PC-3 (cell line): ENCODE measurements at regions of chr2 and their contacts with region 1.

Region 1: GRCh38 chr2:172555522-172556283 is at the start of gene PDK1:
- DNase-seq: peak; percentile 95
- ATAC-seq: peak; percentile 83
- H3K4me3 ChIP-seq: peak within 1 kb of the TSS; percentile 95
- H3K27ac ChIP-seq: peak within 1 kb of the TSS; percentile 69
- H3K4me1 ChIP-seq: peaks cover 54% of the 10 kb centered on the region
- H3K27me3 ChIP-seq: no peaks in the 10 kb centered on the region
- CTCF ChIP-seq: no peak
- total RNA-seq, gene PDK1: 45.8 and 66.3 TPM in 2 replicates

Region 2: DNA sequence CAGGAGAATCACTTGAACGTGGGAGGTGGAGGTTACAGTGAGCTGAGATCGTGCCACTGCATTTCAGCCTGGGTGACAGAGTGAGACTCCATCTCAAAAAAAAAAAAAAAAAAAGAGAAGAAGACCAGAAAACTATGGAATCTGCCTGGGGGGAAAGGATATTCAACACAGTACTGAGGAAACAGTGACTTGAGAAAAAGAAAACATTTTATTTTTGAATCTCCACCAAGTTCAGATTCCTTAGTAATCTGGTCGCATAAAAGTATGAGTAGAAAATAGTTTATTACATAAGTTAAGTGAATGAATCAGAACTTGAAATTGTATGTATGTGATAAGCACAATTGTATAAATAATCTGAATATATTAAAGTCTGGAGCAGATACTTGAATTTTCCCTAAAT is 646.4 kb before region 1 on chr2:
- CTCF ChIA-PET with region 1: no interaction called
- POLR2A ChIA-PET with region 1: interaction called, 12 read pairs
- intact Hi-C with region 1: no loop called
- DNase-seq: no peak
- ATAC-seq: no peak
- H3K4me3 ChIP-seq: no peak overlapping the region
- H3K27ac ChIP-seq: no peak overlapping the region
- H3K4me1 ChIP-seq: no peaks in the 10 kb centered on the region
- H3K27me3 ChIP-seq: no peaks in the 10 kb centered on the region
- CTCF ChIP-seq: no peak

Region 3: GRCh38 chr2:172380436-172381274 is 175.0 kb before region 1 on chr2:
- CTCF ChIA-PET with region 1: no interaction called
- POLR2A ChIA-PET with region 1: no interaction called
- intact Hi-C with region 1: no loop called
- DNase-seq: no peak
- ATAC-seq: no peak
- H3K4me3 ChIP-seq: no peak overlapping the region
- H3K27ac ChIP-seq: no peak overlapping the region
- H3K4me1 ChIP-seq: no peaks in the 10 kb centered on the region
- H3K27me3 ChIP-seq: no peaks in the 10 kb centered on the region
- CTCF ChIP-seq: no peak

Region 4: GRCh38 chr2:172623249-172623965 is 67.7 kb after region 1 on chr2:
- CTCF ChIA-PET with region 1: no interaction called
- POLR2A ChIA-PET with region 1: no interaction called
- intact Hi-C with region 1: no loop called
- DNase-seq: no peak
- ATAC-seq: peak; percentile 48
- H3K4me3 ChIP-seq: no peak overlapping the region
- H3K27ac ChIP-seq: peak overlapping the region; percentile 19
- H3K4me1 ChIP-seq: no peaks in the 10 kb centered on the region
- H3K27me3 ChIP-seq: no peaks in the 10 kb centered on the region
- CTCF ChIP-seq: no peak

Region 5: DNA sequence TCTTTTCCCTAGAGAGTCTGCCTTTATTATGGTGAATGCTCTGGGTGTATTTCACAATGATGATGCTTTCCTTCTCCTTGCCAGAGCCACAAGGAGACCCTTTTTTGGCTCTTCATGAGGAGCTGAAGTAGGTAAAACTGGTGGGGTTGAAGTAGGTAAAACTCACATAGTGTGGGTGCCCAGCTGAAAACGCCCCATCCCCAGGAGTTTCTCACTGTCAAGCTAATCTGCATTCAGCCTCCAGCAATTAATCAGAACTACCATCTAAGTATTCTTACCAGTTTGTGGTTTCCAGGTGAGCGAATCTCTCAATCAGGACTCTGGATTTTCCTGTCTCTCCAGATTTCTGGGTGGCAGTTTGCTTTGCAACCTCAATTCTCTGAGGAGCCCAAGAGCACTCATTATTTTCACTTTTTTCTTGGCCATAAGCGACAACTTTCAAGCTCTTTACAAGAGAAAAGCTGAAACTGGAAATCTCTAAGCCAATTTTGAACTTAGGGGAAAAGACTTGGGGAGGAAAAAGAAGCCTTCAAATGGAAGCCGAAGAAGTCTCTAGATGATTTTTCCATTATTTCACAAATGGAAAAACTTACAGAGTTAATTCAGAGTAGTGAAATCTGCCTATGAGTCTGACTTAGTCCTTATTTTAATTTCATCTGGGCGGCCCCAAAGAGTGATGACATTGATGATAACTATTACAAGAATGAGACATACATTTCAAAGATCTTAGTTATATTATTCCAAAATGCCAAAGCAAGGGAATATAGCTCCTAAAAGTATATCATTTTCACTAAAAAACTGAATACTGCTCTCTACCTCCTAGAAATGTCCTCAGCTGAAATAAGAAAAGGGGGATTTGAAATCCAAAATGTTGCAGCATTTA is 398.5 kb after region 1 on chr2:
- CTCF ChIA-PET with region 1: no interaction called
- POLR2A ChIA-PET with region 1: no interaction called
- intact Hi-C with region 1: no loop called
- DNase-seq: peak; percentile 84
- ATAC-seq: peak; percentile 43
- H3K4me3 ChIP-seq: no peak overlapping the region; the same call in 1 of the 2 replicates
- H3K27ac ChIP-seq: peak overlapping the region; percentile 47
- H3K4me1 ChIP-seq: peaks cover 18% of the 10 kb centered on the region
- H3K27me3 ChIP-seq: no peaks in the 10 kb centered on the region
- CTCF ChIP-seq: no peak